Psoas muscle (tissue), 8 donors: ENCODE measurements at regions of chr2 and their contacts with region 1.

Region 1: DNA sequence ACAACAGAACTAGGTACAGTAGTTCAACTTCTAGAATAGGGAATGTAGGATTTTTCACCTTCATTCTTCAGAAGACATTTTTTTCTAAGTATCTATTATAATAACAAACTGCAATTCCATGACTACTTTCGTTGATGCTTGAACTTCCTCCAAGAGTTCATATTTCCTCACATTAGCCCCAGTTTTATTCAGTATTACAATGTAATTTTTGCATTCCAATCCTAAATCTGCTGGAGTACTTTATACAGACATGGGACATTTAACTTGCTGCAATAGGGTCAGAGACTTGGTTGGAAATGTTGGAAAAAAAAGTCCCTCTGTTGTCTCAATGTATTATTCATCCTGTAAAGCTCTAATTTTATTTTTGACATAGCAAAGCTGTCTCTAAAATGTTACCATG is 19.6 kb upstream of the FTCDNL1 start:
- DNase-seq: no peak
- ATAC-seq: no peak
- H3K4me3 ChIP-seq: no peak overlapping the region
- H3K27ac ChIP-seq: no peak overlapping the region
- H3K4me1 ChIP-seq: no peaks in the 10 kb centered on the region
- H3K27me3 ChIP-seq: no peaks in the 10 kb centered on the region
- CTCF ChIP-seq: no peak

Region 2: DNA sequence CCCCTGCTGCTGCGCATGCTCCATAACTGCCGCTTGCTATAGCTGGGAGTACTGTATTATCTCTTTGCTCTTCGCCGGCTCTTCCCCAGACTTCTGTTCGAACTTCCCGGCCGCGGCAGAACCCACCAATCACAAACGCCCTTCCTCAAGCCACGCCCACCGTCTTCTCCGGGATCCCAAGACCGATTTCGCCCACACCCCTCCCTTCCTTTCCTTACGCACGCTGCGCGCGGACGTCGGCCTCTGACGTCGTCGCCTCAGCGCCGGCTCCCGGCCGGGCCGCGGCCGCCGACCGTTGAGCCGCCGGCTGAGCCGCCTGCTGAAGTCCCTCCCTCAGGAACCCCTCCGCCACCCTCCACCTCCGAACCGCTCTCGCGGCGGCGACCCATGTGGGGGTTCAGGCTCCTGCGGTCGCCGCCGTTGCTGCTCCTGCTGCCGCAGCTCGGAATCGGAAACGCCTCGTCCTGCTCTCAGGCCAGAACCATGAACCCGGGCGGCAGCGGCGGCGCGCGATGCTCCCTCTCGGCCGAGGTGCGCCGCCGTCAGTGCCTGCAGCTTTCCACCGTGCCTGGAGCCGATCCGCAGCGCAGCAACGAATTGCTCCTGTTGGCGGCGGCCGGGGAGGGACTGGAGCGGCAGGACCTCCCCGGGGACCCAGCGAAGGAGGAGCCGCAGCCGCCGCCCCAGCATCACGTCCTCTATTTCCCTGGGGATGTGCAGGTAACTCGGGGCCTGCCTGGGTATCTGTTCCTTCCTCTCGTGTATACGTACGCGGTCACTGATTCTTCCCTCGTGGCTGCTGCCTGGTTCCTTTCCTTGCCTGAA is 40.7 kb after region 1 on chr2 and contains the start of gene C2orf69:
- intact Hi-C with region 1: loop called in 1 of 2 experiments (anchors 5 kb)
- DNase-seq: peak; percentile 94 to 97
- ATAC-seq: peak; percentile 99
- H3K4me3 ChIP-seq: peak within 1 kb of the TSS; percentile 87
- H3K27ac ChIP-seq: peak within 1 kb of the TSS; percentile 98
- H3K4me1 ChIP-seq: peaks cover 27% of the 10 kb centered on the region
- H3K27me3 ChIP-seq: no peaks in the 10 kb centered on the region
- CTCF ChIP-seq: peak; percentile 3
- total RNA-seq, gene C2orf69: 13.0 to 21.6 (median 15.8) TPM